A673 (cell line): ENCODE measurements at regions of chr1 and their contacts with region 1.

Region 1: DNA sequence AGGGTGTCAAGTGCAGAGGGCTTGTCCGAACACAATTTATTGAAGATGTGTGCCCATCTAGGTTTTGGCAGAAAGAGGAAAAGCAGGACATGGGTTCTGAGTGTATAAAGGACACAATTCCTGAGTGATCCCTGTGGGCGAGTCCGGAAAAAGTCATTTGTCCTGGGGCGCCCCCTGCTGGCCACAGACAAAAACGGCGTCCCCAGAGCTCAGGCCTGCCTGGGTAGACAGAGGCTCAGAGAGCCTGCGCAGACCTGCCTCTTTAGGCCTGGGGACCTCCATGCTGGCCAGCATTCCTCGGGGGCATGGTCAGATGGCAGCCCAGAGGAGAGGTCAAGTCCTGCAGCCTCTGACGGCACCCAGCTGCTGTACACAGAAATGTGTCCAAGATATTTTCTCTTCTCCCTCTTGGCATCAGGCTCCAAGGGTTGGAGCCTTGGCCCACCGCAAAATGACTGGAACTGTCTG is 65.5 kb upstream of the LRP8 start:
- DNase-seq: peak; percentile 59
- H3K4me3 ChIP-seq: no peak overlapping the region
- H3K27ac ChIP-seq: no peak overlapping the region
- H3K4me1 ChIP-seq: no peaks in the 10 kb centered on the region
- H3K27me3 ChIP-seq: no peaks in the 10 kb centered on the region
- CTCF ChIP-seq: peak; percentile 69

Region 2: DNA sequence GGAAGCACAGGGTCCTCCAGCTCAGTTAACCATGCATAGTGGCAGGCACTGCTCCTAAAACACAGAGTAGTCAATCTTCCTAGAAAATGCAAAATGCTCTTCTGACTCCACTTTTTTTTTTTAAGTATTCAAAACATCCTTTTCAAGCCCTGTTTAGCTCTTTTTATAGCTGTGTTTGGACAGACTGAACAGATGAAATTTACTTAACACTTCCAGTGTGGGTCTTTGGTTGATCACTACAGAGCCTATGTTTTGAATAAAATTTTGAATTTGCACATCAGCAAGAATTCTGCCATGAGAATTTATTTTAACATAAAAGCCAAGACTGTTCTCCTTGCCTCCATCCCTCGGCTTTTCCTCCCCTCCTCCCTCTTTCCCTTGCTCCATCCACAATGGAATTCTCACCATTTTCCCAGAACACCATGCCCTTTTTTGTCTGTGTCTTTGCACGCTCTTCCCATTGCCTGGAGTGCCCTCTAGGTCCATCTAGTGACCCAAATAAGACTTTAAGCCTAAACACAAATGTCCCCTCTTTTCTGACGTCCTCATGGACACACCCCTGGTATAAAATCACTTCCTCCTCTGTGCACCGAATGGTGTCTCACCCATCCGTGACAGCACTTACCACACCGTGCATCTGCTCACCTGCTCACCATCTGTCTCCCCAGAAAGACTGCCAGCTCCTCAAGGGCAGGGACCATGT is 220.8 kb before region 1 on chr1:
- CTCF ChIA-PET with region 1: no interaction called
- POLR2A ChIA-PET with region 1: no interaction called
- intact Hi-C with region 1: no loop called
- DNase-seq: no peak
- H3K4me3 ChIP-seq: no peak overlapping the region
- H3K27ac ChIP-seq: no peak overlapping the region
- H3K4me1 ChIP-seq: no peaks in the 10 kb centered on the region
- H3K27me3 ChIP-seq: no peaks in the 10 kb centered on the region
- CTCF ChIP-seq: 0 out of 2 replicates have a peak, but pooled peaks have one; percentile 11

Region 3: GRCh38 chr1:53362851-53363642 is 30.3 kb before region 1 on chr1:
- CTCF ChIA-PET with region 1: no interaction called
- POLR2A ChIA-PET with region 1: no interaction called
- intact Hi-C with region 1: no loop called
- DNase-seq: no peak
- H3K4me3 ChIP-seq: no peak overlapping the region
- H3K27ac ChIP-seq: no peak overlapping the region
- H3K4me1 ChIP-seq: no peaks in the 10 kb centered on the region
- H3K27me3 ChIP-seq: no peaks in the 10 kb centered on the region
- CTCF ChIP-seq: no peak

Region 4: GRCh38 chr1:53376041-53376461 is 17.3 kb before region 1 on chr1:
- CTCF ChIA-PET with region 1: interaction called, 14 read pairs
- POLR2A ChIA-PET with region 1: no interaction called
- intact Hi-C with region 1: no loop called
- DNase-seq: no peak
- H3K4me3 ChIP-seq: no peak overlapping the region
- H3K27ac ChIP-seq: no peak overlapping the region
- H3K4me1 ChIP-seq: no peaks in the 10 kb centered on the region
- H3K27me3 ChIP-seq: no peaks in the 10 kb centered on the region
- CTCF ChIP-seq: no peak

Region 5: GRCh38 chr1:53450225-53450624 is 56.9 kb after region 1 on chr1:
- CTCF ChIA-PET with region 1: no interaction called
- POLR2A ChIA-PET with region 1: no interaction called
- intact Hi-C with region 1: no loop called
- DNase-seq: no peak
- H3K4me3 ChIP-seq: no peak overlapping the region
- H3K27ac ChIP-seq: no peak overlapping the region
- H3K4me1 ChIP-seq: no peaks in the 10 kb centered on the region
- H3K27me3 ChIP-seq: no peaks in the 10 kb centered on the region
- CTCF ChIP-seq: peak; percentile 53